WTC11 (cell line): ENCODE measurements at regions of chr5 and their contacts with region 1.

Region 1: GRCh38 chr5:60843936-60844905 is at the start of gene ELOVL7:
- DNase-seq: peak; percentile 93
- ATAC-seq: peak; percentile 90
- H3K4me3 Mint-ChIP-seq: peak within 1 kb of the TSS; percentile 93
- H3K27ac Mint-ChIP-seq: peak within 1 kb of the TSS; percentile 94
- H3K4me1 Mint-ChIP-seq: peaks cover 28% of the 10 kb centered on the region
- H3K27me3 Mint-ChIP-seq: peaks cover 23% of the 10 kb centered on the region
- CTCF ChIP-seq: no peak
- total RNA-seq, gene ELOVL7: 7.1 to 8.5 TPM (median 7.8 TPM) in 3 replicates

Region 2: DNA sequence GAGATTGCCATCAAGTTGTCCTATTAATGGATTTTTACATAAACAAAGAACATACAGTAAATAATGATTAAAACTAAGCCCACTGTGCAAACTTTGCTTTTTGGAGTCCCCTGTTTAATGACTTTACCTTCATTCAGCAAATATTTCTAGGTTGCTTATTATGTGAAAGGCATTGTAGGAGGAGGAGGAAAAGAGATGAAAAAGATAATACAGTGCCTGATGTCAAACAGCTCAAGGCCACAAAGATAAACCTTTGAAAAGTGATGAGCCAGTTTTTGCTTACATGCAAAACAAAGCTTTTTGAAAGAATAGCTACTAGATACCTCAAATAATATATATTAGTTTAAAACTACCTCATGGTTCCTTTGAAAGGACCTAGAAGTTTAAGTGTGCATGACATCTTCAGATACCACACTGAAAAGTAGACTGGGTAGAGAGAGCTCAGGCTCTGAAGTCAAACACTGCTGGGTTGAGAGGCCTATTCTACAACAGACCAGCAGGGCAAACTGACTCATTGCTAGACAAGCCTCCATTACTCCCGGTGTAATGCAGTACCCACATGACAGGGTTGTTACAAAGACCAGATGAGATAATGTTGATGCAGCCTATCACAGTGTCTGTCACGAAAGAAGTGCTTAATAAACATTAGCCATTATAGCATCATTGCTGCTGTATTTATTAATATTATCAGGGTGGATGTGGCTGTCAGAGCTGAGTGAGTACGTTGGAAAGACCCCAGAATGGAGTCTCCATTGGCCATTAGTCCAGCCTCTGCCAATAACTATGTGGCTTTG is 156.1 kb before region 1 on chr5:
- CTCF ChIA-PET with region 1: interaction called, 13 read pairs
- POLR2A ChIA-PET with region 1: no interaction called
- DNase-seq: no peak
- ATAC-seq: peak; percentile 99
- H3K4me3 Mint-ChIP-seq: no peak overlapping the region
- H3K27ac Mint-ChIP-seq: no peak overlapping the region
- H3K4me1 Mint-ChIP-seq: peaks cover 19% of the 10 kb centered on the region
- H3K27me3 Mint-ChIP-seq: no peaks in the 10 kb centered on the region
- CTCF ChIP-seq: no peak

Region 3: DNA sequence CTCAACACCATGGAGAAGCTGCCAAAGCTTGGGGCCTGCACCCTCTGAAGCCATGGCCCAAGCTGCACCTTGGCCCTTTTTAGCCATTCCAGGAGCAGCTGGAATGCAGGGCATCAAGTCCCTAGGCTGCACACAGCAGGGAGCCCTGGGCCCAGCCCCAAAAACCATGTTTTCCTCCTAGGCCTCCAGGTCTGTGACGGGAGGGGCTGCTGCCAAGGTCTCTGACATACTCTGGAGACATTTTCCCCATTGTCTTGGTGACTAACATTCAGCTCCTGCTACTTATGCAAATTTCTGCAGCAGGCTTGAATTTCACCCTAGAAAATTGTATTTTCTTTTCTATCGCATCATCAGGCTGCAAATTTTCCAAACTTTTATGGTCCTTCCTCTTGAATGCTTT is 64.8 kb before region 1 on chr5:
- CTCF ChIA-PET with region 1: no interaction called
- POLR2A ChIA-PET with region 1: no interaction called
- DNase-seq: peak; percentile 73
- ATAC-seq: peak; percentile 90
- H3K4me3 Mint-ChIP-seq: no peak overlapping the region
- H3K27ac Mint-ChIP-seq: peak overlapping the region; percentile 90
- H3K4me1 Mint-ChIP-seq: peaks cover 16% of the 10 kb centered on the region
- H3K27me3 Mint-ChIP-seq: no peaks in the 10 kb centered on the region
- CTCF ChIP-seq: no peak